ENCODE measurements at regions of chr6 and their contacts with region 1.

Region 1: DNA sequence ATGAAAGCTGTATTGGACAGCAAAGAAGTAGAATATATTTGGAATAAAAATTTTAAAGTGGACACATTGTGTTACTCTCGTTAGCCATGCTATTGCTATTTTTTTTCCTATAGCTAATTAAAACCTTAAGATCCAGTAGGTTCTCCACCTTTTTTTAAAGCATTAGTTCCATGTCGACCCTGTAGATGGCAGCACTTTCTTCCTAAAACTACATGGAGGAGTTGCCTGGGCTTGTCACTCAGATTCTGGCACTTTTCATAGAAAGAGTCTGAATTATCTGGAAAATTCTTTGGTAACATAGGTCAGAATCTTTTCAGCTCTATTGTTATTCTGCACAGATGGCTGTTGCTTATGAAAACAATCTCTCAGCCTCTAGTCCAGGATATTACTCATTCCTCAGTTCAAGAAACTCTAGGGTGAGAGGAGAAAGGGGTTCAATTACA is 42.0 kb upstream of the ESR1 start:
- DNase-seq: no peak
- ATAC-seq: peak; percentile 75
- H3K4me3 ChIP-seq: no peak overlapping the region
- H3K27ac ChIP-seq: no peak overlapping the region
- H3K4me1 ChIP-seq: peaks cover 9% of the 10 kb centered on the region
- H3K27me3 ChIP-seq: no peaks in the 10 kb centered on the region
- CTCF ChIP-seq: peak; percentile 81

Region 2: GRCh38 chr6:152107973-152108372 is 342.5 kb after region 1 on chr6:
- intact Hi-C with region 1: loop called (anchors 5 kb)
- DNase-seq: no peak
- ATAC-seq: no peak
- H3K4me3 ChIP-seq: no peak overlapping the region
- H3K27ac ChIP-seq: no peak overlapping the region
- H3K4me1 ChIP-seq: no peaks in the 10 kb centered on the region
- H3K27me3 ChIP-seq: no peaks in the 10 kb centered on the region
- CTCF ChIP-seq: no peak